Activated CD4-positive, alpha-beta T cell treated with anti-CD3 and anti-CD28 coated beads for 36 hours (primary cell): ENCODE measurements at regions of chr15 and their contacts with region 1.

Region 1: GRCh38 chr15:35399901-35400300 is 146.1 kb downstream of the DPH6 start:
- DNase-seq: no peak
- ATAC-seq: no peak
- H3K4me3 Mint-ChIP-seq: no peak overlapping the region
- H3K27ac Mint-ChIP-seq: no peak overlapping the region
- H3K4me1 Mint-ChIP-seq: no peaks in the 10 kb centered on the region
- H3K27me3 Mint-ChIP-seq: no peaks in the 10 kb centered on the region

Region 2: DNA sequence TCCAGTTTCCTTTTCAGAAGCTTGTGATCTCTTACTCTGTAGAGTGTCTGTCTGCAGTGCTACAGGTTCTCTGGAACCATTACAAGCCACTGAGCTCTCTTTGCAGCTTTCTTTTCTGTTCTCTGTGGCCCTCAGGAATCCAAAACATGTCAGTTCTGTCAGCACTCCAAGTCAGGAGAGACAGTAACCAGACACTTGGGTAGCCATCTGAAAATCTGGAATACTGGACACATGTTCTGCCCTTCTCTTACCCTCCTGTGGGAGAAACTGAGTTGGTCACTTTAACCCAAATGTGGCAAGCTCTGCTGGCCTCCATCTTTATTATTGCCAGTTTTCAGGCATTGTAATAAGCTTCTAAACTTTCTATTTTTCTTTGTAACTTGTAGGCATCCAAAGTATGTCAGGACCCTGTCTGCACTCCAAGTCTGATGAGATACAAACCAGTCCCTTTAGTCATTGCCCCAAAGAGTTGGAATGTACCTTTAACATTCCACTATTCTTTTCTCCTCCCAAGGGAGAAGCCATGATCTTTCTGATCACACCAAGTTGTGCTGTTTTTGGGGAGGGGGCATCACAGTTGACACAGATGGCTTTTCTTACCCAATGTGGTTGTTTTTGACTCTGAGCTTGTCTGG is 37.6 kb before region 1 on chr15:
- CTCF ChIA-PET with region 1: no interaction called
- POLR2A ChIA-PET with region 1: no interaction called
- intact Hi-C with region 1: no loop called
- DNase-seq: no peak
- ATAC-seq: no peak
- H3K4me3 Mint-ChIP-seq: no peak overlapping the region
- H3K27ac Mint-ChIP-seq: no peak overlapping the region
- H3K4me1 Mint-ChIP-seq: no peaks in the 10 kb centered on the region
- H3K27me3 Mint-ChIP-seq: no peaks in the 10 kb centered on the region

Region 3: DNA sequence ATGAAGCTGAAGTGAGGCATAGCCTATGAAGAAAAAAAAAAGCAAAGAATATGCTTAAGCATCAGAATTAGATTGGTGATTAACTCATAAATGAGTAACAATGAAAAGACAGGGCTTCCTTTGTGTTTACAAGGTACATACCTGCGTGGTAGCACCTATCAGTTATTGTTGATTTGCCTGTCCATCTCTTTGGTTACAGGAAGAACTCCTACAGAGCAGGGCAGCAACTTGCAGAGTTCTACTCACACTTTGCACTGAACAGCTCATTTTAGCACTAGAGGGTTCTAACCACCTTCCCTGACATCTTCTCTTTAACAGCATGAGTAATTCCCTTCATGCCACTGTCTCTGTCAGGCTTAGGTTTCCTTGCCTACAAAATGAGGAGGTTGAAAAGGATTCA is 19.9 kb before region 1 on chr15:
- CTCF ChIA-PET with region 1: no interaction called
- POLR2A ChIA-PET with region 1: no interaction called
- intact Hi-C with region 1: loop called in 1 of 2 experiments (anchors 2 kb)
- DNase-seq: no peak
- ATAC-seq: no peak
- H3K4me3 Mint-ChIP-seq: no peak overlapping the region
- H3K27ac Mint-ChIP-seq: no peak overlapping the region
- H3K4me1 Mint-ChIP-seq: no peaks in the 10 kb centered on the region
- H3K27me3 Mint-ChIP-seq: no peaks in the 10 kb centered on the region

Region 4: DNA sequence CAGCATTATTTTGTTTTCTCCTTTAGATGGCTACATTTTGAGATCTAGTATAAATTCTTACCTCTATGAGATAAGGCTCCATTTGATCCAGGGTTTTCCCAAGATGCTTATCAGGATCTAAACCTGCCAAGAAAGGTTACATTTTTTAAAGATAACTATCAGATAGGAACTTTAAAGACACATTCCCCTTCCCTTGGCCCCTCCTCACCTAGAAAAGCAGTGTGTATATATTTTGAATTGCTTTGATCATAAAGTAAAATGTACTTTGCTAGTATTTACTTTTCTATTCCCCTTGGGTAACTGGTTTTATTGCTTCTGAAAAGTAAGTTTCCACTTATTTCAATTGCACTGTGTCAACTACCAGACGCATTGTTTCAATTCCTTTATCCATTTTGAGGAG is 10.9 kb after region 1 on chr15:
- CTCF ChIA-PET with region 1: no interaction called
- POLR2A ChIA-PET with region 1: no interaction called
- intact Hi-C with region 1: no loop called
- DNase-seq: no peak
- ATAC-seq: no peak
- H3K4me3 Mint-ChIP-seq: no peak overlapping the region
- H3K27ac Mint-ChIP-seq: no peak overlapping the region
- H3K4me1 Mint-ChIP-seq: no peaks in the 10 kb centered on the region
- H3K27me3 Mint-ChIP-seq: no peaks in the 10 kb centered on the region

Region 5: DNA sequence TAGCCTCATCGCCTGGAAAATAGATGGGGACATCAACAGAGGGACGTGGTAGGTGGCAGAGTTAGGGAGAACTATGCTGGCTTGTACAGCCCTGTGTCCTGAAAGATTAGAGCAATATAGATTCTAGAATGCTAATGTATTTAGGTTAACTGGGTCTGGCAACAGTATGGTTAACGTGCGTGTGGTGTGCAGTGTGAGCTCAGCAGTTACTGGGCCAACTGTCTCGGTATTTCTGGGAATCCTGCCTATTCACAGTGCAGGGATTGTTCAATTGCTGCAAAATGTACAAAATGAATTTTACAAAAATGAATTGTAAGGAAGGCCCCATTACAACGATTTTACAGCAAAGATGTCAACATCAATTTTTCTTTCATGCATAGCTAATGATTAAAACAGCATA is 1679.8 kb after region 1 on chr15:
- CTCF ChIA-PET with region 1: no interaction called
- POLR2A ChIA-PET with region 1: no interaction called
- intact Hi-C with region 1: no loop called
- DNase-seq: no peak
- ATAC-seq: no peak
- H3K4me3 Mint-ChIP-seq: no peak overlapping the region
- H3K27ac Mint-ChIP-seq: no peak overlapping the region
- H3K4me1 Mint-ChIP-seq: no peaks in the 10 kb centered on the region
- H3K27me3 Mint-ChIP-seq: peaks cover 14% of the 10 kb centered on the region